Activated CD8-positive, alpha-beta memory T cell treated with anti-CD3 and anti-CD28 coated beads, Interleukin-2, amount 10 ng/mL, durations not matched to agents 7 days and 5 days (primary cell): ENCODE measurements at regions of chr3 and their contacts with region 1.

Region 1: DNA sequence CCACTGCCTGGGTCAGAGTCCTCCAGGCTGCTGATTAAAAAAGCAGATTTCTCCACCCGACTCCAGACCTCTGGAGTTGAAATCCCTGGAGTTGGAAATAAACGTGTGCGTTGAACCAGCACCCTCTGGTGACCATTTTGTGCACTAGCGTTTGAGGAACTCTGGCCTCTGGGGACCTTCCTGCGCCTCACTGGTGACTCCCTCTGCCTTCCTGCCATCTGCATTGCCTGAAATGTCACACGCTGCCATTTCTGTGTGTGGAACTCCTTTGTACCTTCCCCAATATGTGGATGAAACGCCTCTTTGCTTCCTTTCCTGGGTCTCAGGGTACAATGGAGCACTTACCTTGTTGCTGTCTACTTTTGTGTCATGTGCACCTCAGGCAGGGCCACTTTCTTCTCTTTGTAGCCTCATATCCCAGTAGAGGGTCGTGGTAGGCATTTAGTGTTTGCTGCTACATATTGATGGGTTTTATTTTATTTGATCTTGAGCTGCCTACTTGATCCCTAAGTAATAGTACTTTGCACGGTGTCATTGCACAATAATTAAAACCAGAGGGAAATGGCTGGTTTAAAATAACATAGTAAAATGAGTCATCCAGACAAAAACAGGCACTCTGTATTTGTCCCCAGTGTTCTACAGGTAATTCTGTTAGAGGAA is 56.8 kb downstream of the GPR171 start:
- DNase-seq: peak; percentile 72
- ATAC-seq: peak; percentile 90
- H3K4me3 Mint-ChIP-seq: no peak overlapping the region
- H3K27ac Mint-ChIP-seq: no peak overlapping the region
- H3K4me1 Mint-ChIP-seq: peaks cover 3% of the 10 kb centered on the region
- H3K27me3 Mint-ChIP-seq: peaks cover 15% of the 10 kb centered on the region

Region 2: GRCh38 chr3:150925751-150926201 is 220.4 kb before region 1 on chr3:
- CTCF ChIA-PET with region 1: interaction called, 22 read pairs
- DNase-seq: peak; percentile 63
- ATAC-seq: peak; percentile 92
- H3K4me3 Mint-ChIP-seq: peak overlapping the region; percentile 56
- H3K27ac Mint-ChIP-seq: no peak overlapping the region
- H3K4me1 Mint-ChIP-seq: peaks cover 6% of the 10 kb centered on the region
- H3K27me3 Mint-ChIP-seq: peaks cover 30% of the 10 kb centered on the region

Region 3: GRCh38 chr3:151086484-151087456 is 59.4 kb before region 1 on chr3:
- CTCF ChIA-PET with region 1: interaction called, 37 read pairs
- DNase-seq: peak; percentile 83
- ATAC-seq: peak; percentile 82
- H3K4me3 Mint-ChIP-seq: peak overlapping the region; percentile 81
- H3K27ac Mint-ChIP-seq: peak overlapping the region; percentile 57
- H3K4me1 Mint-ChIP-seq: peaks cover 12% of the 10 kb centered on the region
- H3K27me3 Mint-ChIP-seq: peaks cover 59% of the 10 kb centered on the region

Region 4: DNA sequence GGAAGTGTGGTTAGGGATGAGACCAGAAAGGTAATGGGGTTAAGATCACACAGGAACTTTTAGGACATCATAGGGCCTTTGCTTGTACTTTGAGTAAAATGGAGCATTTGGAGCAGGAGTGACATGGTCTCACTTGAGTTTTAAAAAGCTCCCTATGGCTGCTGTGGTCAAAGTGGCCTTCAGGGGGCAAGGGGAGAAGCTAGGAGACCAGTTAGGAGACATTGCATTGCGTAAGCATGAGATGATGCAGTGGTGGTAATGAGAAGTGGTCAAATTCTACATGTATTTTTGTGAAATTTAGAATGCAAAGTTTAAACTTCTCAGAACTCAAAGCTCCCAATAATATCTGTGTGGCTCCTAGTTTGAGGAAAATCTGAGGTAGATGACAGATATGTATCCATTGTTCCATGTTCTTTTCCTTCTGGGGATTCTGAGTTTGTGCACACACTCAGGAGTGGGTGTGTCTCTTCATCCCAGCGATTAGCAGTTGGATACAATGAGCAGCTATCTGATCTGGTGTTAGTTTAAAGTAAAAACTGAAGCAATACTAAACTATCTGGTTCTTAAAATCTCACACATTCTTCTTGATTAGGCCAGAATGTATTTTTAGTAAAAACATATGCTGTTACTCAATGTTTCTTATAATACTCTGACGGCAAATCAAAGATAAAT is 32.7 kb before region 1 on chr3:
- CTCF ChIA-PET with region 1: interaction called, 10 read pairs
- DNase-seq: no peak
- ATAC-seq: no peak
- H3K4me3 Mint-ChIP-seq: no peak overlapping the region
- H3K27ac Mint-ChIP-seq: no peak overlapping the region
- H3K4me1 Mint-ChIP-seq: no peaks in the 10 kb centered on the region
- H3K27me3 Mint-ChIP-seq: peaks cover 40% of the 10 kb centered on the region

Region 5: GRCh38 chr3:151135541-151136337 is 10.5 kb before region 1 on chr3:
- CTCF ChIA-PET with region 1: interaction called, 16 read pairs
- DNase-seq: peak; percentile 88
- ATAC-seq: peak; percentile 93
- H3K4me3 Mint-ChIP-seq: peak overlapping the region; percentile 31
- H3K27ac Mint-ChIP-seq: peak overlapping the region; percentile 85
- H3K4me1 Mint-ChIP-seq: peaks cover 31% of the 10 kb centered on the region
- H3K27me3 Mint-ChIP-seq: peaks cover 22% of the 10 kb centered on the region

Region 6: DNA sequence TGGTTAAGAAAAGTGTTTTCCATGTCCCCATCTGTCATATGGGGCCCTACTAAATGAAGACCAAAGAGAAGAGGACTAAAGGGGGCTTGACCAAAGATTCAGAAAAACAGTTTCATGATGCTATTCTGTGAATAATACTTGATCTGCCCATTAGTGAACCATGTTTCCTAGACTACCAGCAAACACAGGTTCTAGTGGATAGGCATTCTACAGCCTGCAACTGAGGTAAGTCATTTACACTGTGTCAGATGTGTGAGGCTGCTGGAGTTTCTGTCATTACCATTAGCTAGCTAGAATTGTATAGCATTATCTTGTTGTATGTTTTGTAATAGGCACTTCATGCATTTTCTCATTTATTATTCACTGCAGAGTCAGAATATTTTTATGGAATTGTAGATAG is 50.2 kb after region 1 on chr3:
- CTCF ChIA-PET with region 1: no interaction called
- DNase-seq: no peak
- ATAC-seq: no peak
- H3K4me3 Mint-ChIP-seq: no peak overlapping the region
- H3K27ac Mint-ChIP-seq: peak overlapping the region; percentile 57
- H3K4me1 Mint-ChIP-seq: peaks cover 56% of the 10 kb centered on the region
- H3K27me3 Mint-ChIP-seq: no peaks in the 10 kb centered on the region